PC-3 (cell line): ENCODE measurements at regions of chr3 and their contacts with region 1.

Region 1: DNA sequence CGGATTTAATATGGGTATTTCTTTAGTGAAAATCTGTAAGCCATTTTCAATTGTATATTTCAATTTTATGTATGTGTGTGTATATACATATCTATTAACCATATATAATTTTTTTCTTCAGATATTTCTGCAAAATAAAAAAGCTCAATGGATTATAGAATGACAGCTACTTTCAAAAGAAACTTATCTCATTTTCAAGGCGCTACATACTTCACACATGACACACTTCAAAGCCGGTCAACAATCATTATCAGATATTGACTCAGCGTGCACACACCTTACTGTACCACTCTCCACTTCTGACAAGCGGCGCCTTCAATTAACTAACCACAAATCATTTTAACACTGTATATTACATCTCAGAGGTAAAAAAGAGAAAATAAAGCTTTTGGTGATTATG is 39.6 kb downstream of the ATP13A3 start:
- DNase-seq: no peak
- ATAC-seq: no peak
- H3K4me3 ChIP-seq: no peak overlapping the region
- H3K27ac ChIP-seq: no peak overlapping the region
- H3K4me1 ChIP-seq: peaks cover 16% of the 10 kb centered on the region
- H3K27me3 ChIP-seq: no peaks in the 10 kb centered on the region
- CTCF ChIP-seq: no peak

Region 2: GRCh38 chr3:194422188-194422587 is 25.0 kb before region 1 on chr3:
- CTCF ChIA-PET with region 1: no interaction called
- POLR2A ChIA-PET with region 1: no interaction called
- intact Hi-C with region 1: no loop called
- DNase-seq: peak; percentile 9
- ATAC-seq: peak; percentile 75
- H3K4me3 ChIP-seq: no peak overlapping the region
- H3K27ac ChIP-seq: no peak overlapping the region
- H3K4me1 ChIP-seq: peaks cover 9% of the 10 kb centered on the region
- H3K27me3 ChIP-seq: no peaks in the 10 kb centered on the region
- CTCF ChIP-seq: no peak

Region 3: DNA sequence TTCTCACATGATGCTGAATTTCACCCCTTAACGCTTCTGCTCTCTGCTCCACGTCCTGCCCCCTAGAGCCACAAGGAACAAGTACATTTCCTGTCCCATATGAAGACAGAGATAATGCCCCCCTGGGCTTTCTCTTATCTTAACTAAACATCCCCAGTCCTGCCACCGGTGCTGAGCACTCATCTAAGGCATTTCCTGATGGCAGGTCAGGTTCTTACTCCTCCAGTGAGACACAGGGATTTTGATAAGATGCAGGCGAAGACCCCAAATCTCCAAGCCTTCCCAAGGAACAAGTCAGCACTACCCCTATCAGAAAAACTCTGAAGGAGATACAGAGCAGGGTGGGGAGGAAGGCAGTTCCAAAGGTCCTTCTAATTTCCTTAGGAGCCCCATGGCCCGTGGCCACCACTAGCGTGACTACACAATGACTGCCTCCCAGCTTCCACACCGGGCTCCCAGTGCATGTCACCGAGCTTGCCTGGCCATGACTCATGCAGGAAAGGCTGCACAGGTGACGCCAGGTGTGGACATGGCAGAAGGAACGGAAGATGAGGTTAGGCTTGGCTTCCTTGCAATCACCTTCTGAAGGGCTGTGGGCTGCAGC is 670.9 kb after region 1 on chr3:
- CTCF ChIA-PET with region 1: interaction called, 19 read pairs
- POLR2A ChIA-PET with region 1: no interaction called
- intact Hi-C with region 1: no loop called
- DNase-seq: peak; percentile 89
- ATAC-seq: peak; percentile 87
- H3K4me3 ChIP-seq: no peak overlapping the region
- H3K27ac ChIP-seq: peak overlapping the region; percentile 81
- H3K4me1 ChIP-seq: peaks cover 26% of the 10 kb centered on the region
- H3K27me3 ChIP-seq: no peaks in the 10 kb centered on the region
- CTCF ChIP-seq: peak; percentile 31; the same call in 1 of the 2 replicates